CD4-positive, alpha-beta T cell (primary cell): ENCODE measurements at regions of chr2 and their contacts with region 1.

Region 1: GRCh38 chr2:101704046-101704466 is 6.5 kb downstream of the MAP4K4 start:
- DNase-seq: peak in 5 of 14 experiments; percentile 23 to 61 (median 54)
- ATAC-seq: peak; percentile 36
- H3K4me3 ChIP-seq: peak overlapping the region; percentile 39
- H3K4me3 Mint-ChIP-seq: peak overlapping the region; percentile 89
- H3K27ac ChIP-seq: peak overlapping the region; percentile 58 to 67
- H3K27ac Mint-ChIP-seq: no peak overlapping the region
- H3K4me1 ChIP-seq: peaks cover 70% of the 10 kb centered on the region
- H3K4me1 Mint-ChIP-seq: peaks cover 63% of the 10 kb centered on the region
- H3K27me3 ChIP-seq: no peaks in the 10 kb centered on the region
- H3K27me3 Mint-ChIP-seq: no peaks in the 10 kb centered on the region
- CTCF ChIP-seq: no peak

Region 2: DNA sequence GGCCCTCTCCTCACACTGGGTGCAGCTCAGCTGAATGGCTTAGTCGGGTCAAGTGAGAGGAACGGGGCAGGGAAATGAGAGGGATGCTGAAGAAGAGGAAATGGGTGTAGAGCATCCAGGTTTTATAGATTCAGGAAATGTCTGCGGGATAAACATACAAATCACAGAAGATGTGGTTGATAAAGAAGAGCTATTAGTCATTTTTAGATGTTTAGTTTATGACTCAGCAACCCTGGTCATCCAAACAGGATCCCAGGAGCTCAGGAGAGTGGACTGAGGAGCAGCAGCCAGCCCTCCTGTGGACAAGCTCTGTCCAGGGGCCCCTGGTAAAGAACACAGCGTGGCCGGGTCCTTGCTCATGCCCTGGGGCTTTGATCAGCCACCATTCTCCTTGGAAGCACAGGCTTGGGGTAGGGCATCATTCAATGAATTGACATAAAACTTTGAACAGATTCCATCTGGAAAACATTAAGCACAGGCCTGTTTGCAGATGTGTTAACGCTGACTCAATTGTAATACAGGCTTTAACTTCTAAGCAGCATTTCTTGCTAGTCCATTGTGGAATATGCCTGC is 801.1 kb before region 1 on chr2:
- CTCF ChIA-PET with region 1: no interaction called
- POLR2A ChIA-PET with region 1: no interaction called
- intact Hi-C with region 1: no loop called
- DNase-seq: no peak
- ATAC-seq: no peak
- H3K4me3 ChIP-seq: no peak overlapping the region
- H3K4me3 Mint-ChIP-seq: no peak overlapping the region
- H3K27ac ChIP-seq: no peak overlapping the region
- H3K27ac Mint-ChIP-seq: no peak overlapping the region
- H3K4me1 ChIP-seq: no peaks in the 10 kb centered on the region
- H3K4me1 Mint-ChIP-seq: peaks cover 19% of the 10 kb centered on the region
- H3K27me3 ChIP-seq: no peaks in the 10 kb centered on the region
- H3K27me3 Mint-ChIP-seq: peaks cover 12% of the 10 kb centered on the region
- CTCF ChIP-seq: no peak

Region 3: DNA sequence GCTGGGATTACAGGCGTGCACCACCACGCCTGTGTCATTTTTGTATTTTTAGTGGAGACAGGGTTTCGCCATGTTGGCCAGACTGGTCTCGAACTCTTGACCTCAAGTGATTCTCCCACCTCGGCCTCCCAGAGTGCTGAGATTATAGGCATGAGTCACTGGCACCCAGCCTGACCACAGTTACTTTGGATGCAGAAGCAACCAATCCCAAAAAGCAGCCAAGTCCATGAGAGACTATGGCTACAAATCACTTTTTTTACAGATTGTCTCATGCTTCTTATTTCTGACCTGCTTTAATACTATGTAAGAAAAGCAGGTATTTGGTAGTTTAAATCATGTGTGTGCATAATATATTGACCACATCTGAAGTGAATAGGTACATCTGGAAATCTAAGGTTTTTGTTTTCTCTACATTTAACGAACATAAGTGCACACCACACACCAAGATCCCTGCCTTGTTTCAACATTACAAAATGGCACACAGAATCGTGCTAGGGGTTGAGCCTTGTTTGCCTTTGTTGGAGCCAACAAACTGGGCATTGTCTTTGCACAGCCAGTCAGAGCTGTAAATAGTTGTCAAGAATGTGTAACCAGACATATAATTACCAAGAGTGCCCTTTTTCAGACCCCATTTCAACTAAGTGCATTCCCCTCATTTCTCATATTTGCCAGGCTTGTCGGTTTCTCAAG is 24.9 kb before region 1 on chr2:
- CTCF ChIA-PET with region 1: no interaction called
- POLR2A ChIA-PET with region 1: no interaction called
- intact Hi-C with region 1: no loop called
- DNase-seq: no peak
- ATAC-seq: no peak
- H3K4me3 ChIP-seq: no peak overlapping the region
- H3K4me3 Mint-ChIP-seq: no peak overlapping the region
- H3K27ac ChIP-seq: no peak overlapping the region
- H3K27ac Mint-ChIP-seq: no peak overlapping the region
- H3K4me1 ChIP-seq: no peaks in the 10 kb centered on the region
- H3K4me1 Mint-ChIP-seq: no peaks in the 10 kb centered on the region
- H3K27me3 ChIP-seq: no peaks in the 10 kb centered on the region
- H3K27me3 Mint-ChIP-seq: no peaks in the 10 kb centered on the region
- CTCF ChIP-seq: no peak

Region 4: DNA sequence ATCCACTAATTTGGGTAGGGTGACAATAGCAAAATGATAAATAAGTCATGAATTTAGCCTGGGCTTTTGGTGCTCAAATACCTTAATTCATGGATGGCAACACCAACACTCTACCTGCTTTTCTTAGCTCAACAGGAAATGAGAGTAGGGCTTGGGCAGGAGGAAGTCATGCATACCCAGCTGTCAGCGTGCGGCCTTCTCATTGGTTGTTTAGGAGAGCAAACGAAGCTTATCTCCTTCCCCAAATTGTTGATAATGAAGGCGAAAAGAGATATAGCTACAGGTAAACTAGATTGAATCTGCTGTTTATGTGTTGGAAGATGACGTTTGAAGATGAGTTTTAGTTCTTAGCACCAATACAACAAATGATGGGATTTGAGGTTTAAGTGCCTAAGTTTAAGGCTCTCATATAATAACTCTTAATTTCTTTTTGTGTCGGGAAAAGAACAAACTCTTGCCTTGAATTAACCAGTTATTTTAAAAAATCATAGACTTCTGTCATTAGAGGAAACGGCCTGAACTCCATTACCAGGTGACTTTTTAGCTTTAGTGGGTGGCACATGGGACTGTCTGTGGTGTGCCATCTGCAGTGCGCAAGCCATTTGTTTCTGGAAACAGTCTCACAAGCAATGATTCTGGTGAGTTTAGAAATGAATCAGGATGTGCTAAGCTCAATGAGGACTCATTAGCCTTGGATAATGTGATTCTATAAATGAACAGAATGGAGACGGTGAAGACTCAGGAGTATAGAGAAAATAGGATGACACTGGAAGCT is 13.2 kb after region 1 on chr2:
- CTCF ChIA-PET with region 1: interaction called, 4 read pairs
- POLR2A ChIA-PET with region 1: interaction called, 81 read pairs
- intact Hi-C with region 1: loop called in 1 of 2 experiments (anchors 2 kb)
- DNase-seq: peak in 12 of 14 experiments; percentile 37 to 85 (median 54)
- ATAC-seq: peak; percentile 76
- H3K4me3 ChIP-seq: peak overlapping the region; percentile 8
- H3K4me3 Mint-ChIP-seq: peak overlapping the region; percentile 76
- H3K27ac ChIP-seq: peak overlapping the region; percentile 53 to 76
- H3K27ac Mint-ChIP-seq: peak overlapping the region; percentile 95
- H3K4me1 ChIP-seq: peaks cover 77% of the 10 kb centered on the region
- H3K4me1 Mint-ChIP-seq: peaks cover 84% of the 10 kb centered on the region
- H3K27me3 ChIP-seq: no peaks in the 10 kb centered on the region
- H3K27me3 Mint-ChIP-seq: no peaks in the 10 kb centered on the region
- CTCF ChIP-seq: no peak

Region 5: DNA sequence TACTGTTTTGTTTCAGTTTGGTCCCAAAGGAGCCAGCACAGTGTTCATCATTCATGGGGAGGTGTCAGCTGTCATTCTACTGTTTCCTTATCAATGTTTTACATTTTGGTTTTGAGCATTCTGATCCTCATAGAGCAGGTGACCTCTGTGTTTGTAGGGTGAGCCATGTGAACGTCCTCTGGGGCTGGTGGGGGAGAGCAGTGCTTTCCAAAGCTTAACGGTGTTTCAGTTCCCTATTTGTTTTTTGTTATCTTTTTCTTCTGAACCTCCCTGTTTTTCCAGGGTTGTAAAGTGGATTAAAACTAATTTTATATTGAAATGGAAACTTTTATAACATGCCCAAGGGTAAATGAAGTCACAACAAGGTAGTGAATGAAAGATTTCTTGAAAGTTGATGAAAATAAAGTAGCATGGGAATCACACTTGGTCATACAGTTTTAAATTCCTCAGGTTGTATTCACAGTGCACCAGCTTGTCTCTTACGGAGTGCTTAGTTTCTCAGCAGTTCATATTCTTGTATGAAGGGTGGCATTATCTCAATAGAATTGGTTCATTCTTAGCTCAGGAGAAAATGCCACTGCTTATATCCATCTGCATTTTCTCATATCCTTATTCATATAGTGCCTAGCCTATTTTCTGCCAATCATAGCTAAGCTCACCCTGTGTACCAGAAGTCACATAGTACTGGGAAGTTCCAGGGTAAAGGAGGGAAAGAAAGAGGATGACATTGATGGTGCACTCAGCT is 48.0 kb after region 1 on chr2:
- CTCF ChIA-PET with region 1: no interaction called
- POLR2A ChIA-PET with region 1: interaction called, 4 read pairs
- intact Hi-C with region 1: loop called in 1 of 2 experiments (anchors 5 kb)
- DNase-seq: no peak
- ATAC-seq: no peak
- H3K4me3 ChIP-seq: no peak overlapping the region
- H3K4me3 Mint-ChIP-seq: peak overlapping the region; percentile 12
- H3K27ac ChIP-seq: no peak overlapping the region
- H3K27ac Mint-ChIP-seq: peak overlapping the region; percentile 69
- H3K4me1 ChIP-seq: peaks cover 38% of the 10 kb centered on the region
- H3K4me1 Mint-ChIP-seq: peaks cover 80% of the 10 kb centered on the region
- H3K27me3 ChIP-seq: no peaks in the 10 kb centered on the region
- H3K27me3 Mint-ChIP-seq: no peaks in the 10 kb centered on the region
- CTCF ChIP-seq: no peak